ENCODE measurements at regions of chr17 and their contacts with region 1.

Region 1: GRCh38 chr17:58631523-58632323 is 60.1 kb downstream of the TEX14 start:
- DNase-seq: peak; percentile 100
- ATAC-seq: peak; percentile 90
- H3K4me3 ChIP-seq: peak overlapping the region; percentile 39 to 48
- H3K27ac ChIP-seq: peak overlapping the region; percentile 80
- H3K4me1 ChIP-seq: peaks cover 11 to 18% of the 10 kb centered on the region in 2 experiments
- H3K27me3 ChIP-seq: no peaks in the 10 kb centered on the region
- CTCF ChIP-seq: peak in 2 of 3 experiments; percentile 7 to 16; a peak in 1 of 6 replicates
- POLR2A ChIP-seq: peak; percentile 100
- RAD21 ChIP-seq: peak; percentile 50

Region 2: GRCh38 chr17:58302171-58302918 is 329.4 kb before region 1 on chr17:
- CTCF ChIA-PET with region 1: no interaction called
- POLR2A ChIA-PET with region 1: no interaction called
- RAD21 ChIA-PET with region 1: no interaction called
- intact Hi-C with region 1: no loop called
- DNase-seq: no peak
- ATAC-seq: no peak
- H3K4me3 ChIP-seq: no peak overlapping the region
- H3K27ac ChIP-seq: no peak overlapping the region
- H3K4me1 ChIP-seq: peaks cover 0 to 9% of the 10 kb centered on the region in 2 experiments; a peak in 2 of 4 replicates
- H3K27me3 ChIP-seq: no peaks in the 10 kb centered on the region
- CTCF ChIP-seq: no peak
- POLR2A ChIP-seq: no peak
- RAD21 ChIP-seq: no peak

Region 3: GRCh38 chr17:58417300-58418092 is 214.2 kb before region 1 on chr17 and contains the start of gene RNF43:
- CTCF ChIA-PET with region 1: no interaction called
- POLR2A ChIA-PET with region 1: interaction called, 10 read pairs
- RAD21 ChIA-PET with region 1: no interaction called
- intact Hi-C with region 1: no loop called
- DNase-seq: peak; percentile 100
- ATAC-seq: peak; percentile 93
- H3K4me3 ChIP-seq: peak within 1 kb of the TSS; percentile 66 to 68
- H3K27ac ChIP-seq: peak within 1 kb of the TSS; percentile 78
- H3K4me1 ChIP-seq: peaks cover 56 to 69% of the 10 kb centered on the region in 2 experiments
- H3K27me3 ChIP-seq: no peaks in the 10 kb centered on the region
- CTCF ChIP-seq: peak; percentile 70 to 92 (median 89); a peak in 5 of 6 replicates
- POLR2A ChIP-seq: no peak
- RAD21 ChIP-seq: peak; percentile 92
- total RNA-seq, gene RNF43: 42.2 TPM

Region 4: DNA sequence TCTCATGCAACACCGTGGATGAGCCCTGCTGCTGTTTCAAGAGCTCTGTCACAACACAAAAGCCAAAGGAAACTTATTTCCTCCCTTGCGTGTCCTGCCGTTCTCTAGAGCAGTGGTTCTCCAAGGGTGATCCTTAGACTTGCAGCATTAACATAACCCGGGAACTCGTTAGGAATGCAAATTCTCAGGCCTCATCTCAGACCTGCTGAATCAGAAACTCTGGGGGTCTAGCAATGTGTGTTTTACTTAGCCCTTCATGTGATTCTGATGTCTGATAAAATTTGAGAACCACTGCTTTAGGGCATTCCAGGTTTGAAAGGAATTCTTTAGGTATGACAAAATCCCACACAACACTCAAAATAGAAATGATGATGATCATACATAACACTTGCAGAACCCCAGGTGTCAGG is 65.9 kb before region 1 on chr17:
- CTCF ChIA-PET with region 1: no interaction called
- POLR2A ChIA-PET with region 1: interaction called, 21 read pairs
- RAD21 ChIA-PET with region 1: no interaction called
- intact Hi-C with region 1: no loop called
- DNase-seq: no peak
- ATAC-seq: no peak
- H3K4me3 ChIP-seq: no peak overlapping the region
- H3K27ac ChIP-seq: no peak overlapping the region
- H3K4me1 ChIP-seq: 0 out of 4 replicates have a peak, but pooled peaks cover 0 to 6% of the 10 kb centered on the region in 2 experiments
- H3K27me3 ChIP-seq: no peaks in the 10 kb centered on the region
- CTCF ChIP-seq: no peak
- POLR2A ChIP-seq: no peak
- RAD21 ChIP-seq: no peak

Region 5: DNA sequence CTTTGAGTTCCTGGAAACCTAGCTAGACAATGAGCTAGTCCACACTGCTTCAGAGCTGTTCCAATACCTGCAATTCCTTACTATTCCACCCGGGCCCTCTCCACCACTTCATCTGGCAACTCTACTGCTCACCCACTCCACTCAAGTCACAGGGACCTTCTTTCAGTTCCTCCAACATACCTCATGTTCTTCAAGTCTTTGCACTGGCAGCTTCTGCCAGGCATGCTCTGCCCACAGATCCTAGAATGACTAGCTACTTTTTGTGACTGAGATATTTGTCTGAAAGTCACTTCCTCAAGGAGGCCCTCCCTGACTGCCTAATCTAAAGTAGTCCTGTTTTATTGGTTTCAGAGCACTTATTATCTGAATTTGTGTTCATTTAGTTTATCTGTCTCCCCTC is 26.3 kb before region 1 on chr17:
- CTCF ChIA-PET with region 1: no interaction called
- POLR2A ChIA-PET with region 1: interaction called, 19 read pairs
- RAD21 ChIA-PET with region 1: no interaction called
- intact Hi-C with region 1: no loop called
- DNase-seq: no peak
- ATAC-seq: peak; percentile 73
- H3K4me3 ChIP-seq: no peak overlapping the region
- H3K27ac ChIP-seq: no peak overlapping the region
- H3K4me1 ChIP-seq: no peaks in the 10 kb centered on the region
- H3K27me3 ChIP-seq: no peaks in the 10 kb centered on the region
- CTCF ChIP-seq: peak in 1 of 3 experiments; percentile 19; a peak in 2 of 6 replicates
- POLR2A ChIP-seq: no peak
- RAD21 ChIP-seq: no peak

Region 6: DNA sequence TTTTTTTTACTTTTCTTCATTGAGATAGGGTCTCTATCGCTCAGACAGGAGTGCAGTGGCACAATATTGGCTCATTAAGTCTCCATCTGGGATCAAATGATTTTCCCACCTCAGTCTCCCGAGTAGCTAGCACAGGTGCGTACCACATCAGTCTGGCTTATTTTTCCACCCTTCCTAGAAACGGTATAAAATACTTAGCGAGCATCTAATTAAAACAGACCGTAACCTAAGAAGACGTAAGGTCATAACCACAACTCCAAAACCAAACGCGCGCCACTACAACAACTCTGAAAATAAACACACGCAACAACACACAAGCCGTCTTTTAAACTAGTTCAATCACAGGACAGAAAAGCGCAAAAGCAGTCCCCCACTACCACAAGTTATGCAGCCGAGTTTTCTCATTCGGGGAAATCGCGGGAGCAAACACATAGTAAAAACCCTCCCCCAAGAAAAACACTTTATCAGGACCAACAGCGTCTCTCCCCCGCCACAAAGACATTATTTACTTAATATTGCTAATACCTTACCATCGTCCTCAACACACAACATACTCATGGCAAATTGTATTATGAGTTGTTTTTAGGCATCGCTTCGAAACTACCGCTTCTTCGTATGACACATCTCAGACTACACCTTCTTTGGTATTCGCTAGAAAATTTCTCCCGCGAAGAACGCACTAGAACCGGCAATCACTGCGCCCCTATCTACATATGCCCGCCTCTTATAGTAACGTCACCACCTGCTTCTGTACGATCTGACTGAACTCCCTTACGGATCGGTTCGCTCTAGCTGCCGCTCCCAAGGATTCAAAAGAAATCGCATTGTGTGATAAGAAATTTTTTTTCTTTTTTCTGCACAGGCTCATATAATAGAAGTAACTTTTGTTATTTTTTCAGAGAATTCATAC is 27.3 kb after region 1 on chr17:
- CTCF ChIA-PET with region 1: interaction called, 8 read pairs
- POLR2A ChIA-PET with region 1: interaction called, 338 read pairs
- RAD21 ChIA-PET with region 1: interaction called in 1 of 2 experiments, 3 read pairs
- intact Hi-C with region 1: loop called (anchors 1 kb)
- DNase-seq: peak; percentile 100
- ATAC-seq: peak; percentile 86
- H3K4me3 ChIP-seq: peak overlapping the region; percentile 33 to 34
- H3K27ac ChIP-seq: peak overlapping the region; percentile 69
- H3K4me1 ChIP-seq: peaks cover 15 to 22% of the 10 kb centered on the region in 2 experiments
- H3K27me3 ChIP-seq: no peaks in the 10 kb centered on the region
- CTCF ChIP-seq: no peak
- POLR2A ChIP-seq: peak; percentile 100
- RAD21 ChIP-seq: peak; percentile 55

Region 7: DNA sequence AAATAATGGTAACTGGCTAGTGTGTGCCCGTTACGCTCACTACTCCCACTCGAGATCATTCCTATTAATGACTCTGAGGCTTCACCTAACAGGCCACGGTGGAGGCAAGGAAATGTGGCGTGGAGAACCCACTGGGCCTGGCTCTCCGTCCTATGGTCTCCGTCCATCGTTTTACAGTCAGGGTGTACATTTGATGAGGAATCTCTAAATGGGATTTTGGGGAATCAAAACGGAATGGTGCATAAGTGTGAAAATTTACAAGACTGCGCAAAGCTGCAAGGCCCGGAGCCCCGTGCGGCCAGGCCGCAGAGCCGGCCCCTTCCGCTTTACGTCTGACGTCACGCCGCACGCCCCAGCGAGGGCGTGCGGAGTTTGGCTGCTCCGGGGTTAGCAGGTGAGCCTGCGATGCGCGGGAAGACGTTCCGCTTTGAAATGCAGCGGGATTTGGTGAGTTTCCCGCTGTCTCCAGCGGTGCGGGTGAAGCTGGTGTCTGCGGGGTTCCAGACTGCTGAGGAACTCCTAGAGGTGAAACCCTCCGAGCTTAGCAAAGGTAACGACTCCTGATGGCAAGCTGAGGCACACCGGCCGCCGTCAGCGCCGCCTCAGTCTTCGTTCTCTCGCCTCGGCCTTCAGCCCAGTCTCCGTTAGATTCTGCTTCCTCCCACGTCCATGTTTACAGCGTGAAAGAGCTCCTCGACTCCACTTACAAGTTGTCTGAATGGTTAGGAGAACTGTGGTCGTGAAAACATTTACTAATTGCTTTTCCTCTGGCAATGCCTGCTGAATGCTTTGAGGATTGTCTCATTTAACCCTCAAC is 60.7 kb after region 1 on chr17 and contains the start of gene RAD51C:
- CTCF ChIA-PET with region 1: no interaction called
- POLR2A ChIA-PET with region 1: interaction called, 49 read pairs
- RAD21 ChIA-PET with region 1: no interaction called
- intact Hi-C with region 1: no loop called
- DNase-seq: peak; percentile 93
- ATAC-seq: peak; percentile 98
- H3K4me3 ChIP-seq: peak within 1 kb of the TSS; percentile 59 to 77
- H3K27ac ChIP-seq: peak within 1 kb of the TSS; percentile 69
- H3K4me1 ChIP-seq: peaks cover 13 to 18% of the 10 kb centered on the region in 2 experiments; a peak in 3 of 4 replicates
- H3K27me3 ChIP-seq: no peaks in the 10 kb centered on the region
- CTCF ChIP-seq: no peak
- POLR2A ChIP-seq: peak; percentile 97
- RAD21 ChIP-seq: peak; percentile 27
- total RNA-seq, gene RAD51C: 94.9 TPM

Measured in HCT116 (cell line).